Natural killer cell (primary cell): ENCODE measurements at regions of chr9 and their contacts with region 1.

Region 1: GRCh38 chr9:125746017-125746773 is 978 bp upstream of the PBX3 start:
- DNase-seq: peak; percentile 92 to 95
- ATAC-seq: peak; percentile 84 to 95 (median 87)
- H3K4me3 ChIP-seq: peak overlapping the region; percentile 82
- H3K4me3 Mint-ChIP-seq: peak overlapping the region; percentile 94
- H3K27ac ChIP-seq: peak overlapping the region; percentile 63
- H3K27ac Mint-ChIP-seq: peak overlapping the region; percentile 88 to 91
- H3K4me1 ChIP-seq: peaks cover 13% of the 10 kb centered on the region
- H3K4me1 Mint-ChIP-seq: peaks cover 32 to 36% of the 10 kb centered on the region in 2 donors
- H3K27me3 ChIP-seq: no peaks in the 10 kb centered on the region
- H3K27me3 Mint-ChIP-seq: no peaks in the 10 kb centered on the region
- CTCF ChIP-seq: no peak

Region 2: DNA sequence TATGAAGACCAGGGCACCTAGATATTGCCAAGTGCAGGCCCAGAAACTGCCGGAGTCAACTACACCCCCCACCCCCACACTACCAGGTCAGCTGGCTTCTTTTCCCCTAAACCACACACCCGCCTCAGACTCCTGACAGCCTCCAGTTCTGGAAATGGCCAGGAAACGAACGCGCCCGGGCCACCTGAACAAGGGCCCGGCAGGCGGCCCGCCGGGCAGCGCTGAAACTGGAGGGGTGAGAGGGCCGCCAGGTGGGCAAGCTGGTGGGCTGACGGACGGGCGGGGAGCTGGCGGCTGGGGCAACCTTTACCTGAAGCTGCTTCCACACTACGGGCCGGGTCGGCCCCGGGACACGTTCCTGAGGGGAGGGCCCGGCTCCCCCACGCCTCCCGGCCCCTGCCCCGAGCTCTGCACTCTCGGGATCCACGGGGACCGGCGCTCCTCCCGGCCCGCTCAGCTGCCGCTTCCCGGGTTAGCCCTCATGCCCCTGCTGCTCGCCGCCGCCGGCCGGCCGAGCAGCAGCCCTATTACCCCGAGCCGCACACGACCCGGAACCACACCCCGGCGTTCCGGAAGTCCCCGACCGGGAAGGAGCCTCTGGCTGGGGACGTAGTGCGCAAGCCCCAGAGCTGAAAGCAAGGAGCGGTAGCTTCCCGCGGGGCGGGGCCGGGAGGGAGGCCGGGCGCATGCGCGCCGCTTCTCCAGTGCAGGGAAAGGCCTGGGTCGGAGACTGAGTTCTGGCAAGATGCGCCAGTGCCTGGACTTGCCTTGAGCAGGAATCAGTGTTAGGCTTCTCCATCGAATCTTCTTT is 39.3 kb before region 1 on chr9 and contains the start of gene MAPKAP1:
- intact Hi-C with region 1: loop called (anchors 5 kb)
- DNase-seq: peak; percentile 80 to 96
- ATAC-seq: peak; percentile 97 to 98 (median 98)
- H3K4me3 ChIP-seq: peak within 1 kb of the TSS; percentile 57
- H3K4me3 Mint-ChIP-seq: peak within 1 kb of the TSS; percentile 90
- H3K27ac ChIP-seq: peak within 1 kb of the TSS; percentile 69
- H3K27ac Mint-ChIP-seq: peak within 1 kb of the TSS; percentile 69 to 90
- H3K4me1 ChIP-seq: peaks cover 13% of the 10 kb centered on the region
- H3K4me1 Mint-ChIP-seq: peaks cover 32 to 36% of the 10 kb centered on the region in 2 donors
- H3K27me3 ChIP-seq: no peaks in the 10 kb centered on the region
- H3K27me3 Mint-ChIP-seq: peaks cover 3 to 7% of the 10 kb centered on the region in 2 donors
- CTCF ChIP-seq: no peak
- total RNA-seq, gene MAPKAP1: 51.1 to 73.0 (median 58.8) TPM